Transverse colon (tissue), 4 donors: ENCODE measurements at regions of chr6 and their contacts with region 1.

Region 1: DNA sequence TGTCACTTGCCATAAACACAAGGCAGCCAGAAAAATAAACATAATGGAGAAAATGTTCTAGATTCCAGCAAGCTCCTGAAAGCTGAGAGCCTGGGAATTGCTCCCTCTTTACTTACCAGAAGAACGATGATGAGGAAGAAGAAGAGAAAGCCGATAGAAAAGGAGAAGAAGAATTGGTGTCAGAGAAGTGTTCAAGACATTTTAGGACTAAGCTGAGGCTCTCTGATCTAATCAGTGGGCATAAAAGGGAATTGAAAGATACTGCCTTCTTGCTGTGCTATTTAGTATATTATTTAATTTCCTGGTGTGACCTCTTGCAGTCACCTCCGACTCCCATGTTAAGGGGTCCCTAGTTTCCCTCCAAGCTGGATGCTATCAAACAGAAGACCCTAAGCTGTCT is 316.6 kb upstream of the JARID2 start:
- DNase-seq: no peak
- H3K4me3 ChIP-seq: no peak overlapping the region
- H3K27ac ChIP-seq: peak overlapping the region in 1 of 4 donors; percentile 15
- H3K4me1 ChIP-seq: peaks cover 0 to 22% (median 5%) of the 10 kb centered on the region in 4 donors
- H3K27me3 ChIP-seq: no peaks in the 10 kb centered on the region
- CTCF ChIP-seq: no peak
- EP300 ChIP-seq: no peak
- POLR2A ChIP-seq: no peak

Region 2: GRCh38 chr6:14711056-14711703 is 218.1 kb before region 1 on chr6:
- in situ Hi-C with region 1: no loop called
- intact Hi-C with region 1: no loop called
- DNase-seq: peak; percentile 49
- H3K4me3 ChIP-seq: no peak overlapping the region
- H3K27ac ChIP-seq: no peak overlapping the region
- H3K4me1 ChIP-seq: peaks cover 0 to 9% (median 0%) of the 10 kb centered on the region in 4 donors
- H3K27me3 ChIP-seq: no peaks in the 10 kb centered on the region
- CTCF ChIP-seq: peak; percentile 30 to 45 (median 39)
- EP300 ChIP-seq: no peak
- POLR2A ChIP-seq: no peak

Region 3: GRCh38 chr6:14883921-14884320 is 45.4 kb before region 1 on chr6:
- in situ Hi-C with region 1: no loop called
- intact Hi-C with region 1: loop called (anchors 2 kb)
- DNase-seq: no peak
- H3K4me3 ChIP-seq: no peak overlapping the region
- H3K27ac ChIP-seq: no peak overlapping the region
- H3K4me1 ChIP-seq: peaks cover 0 to 36% (median 0%) of the 10 kb centered on the region in 4 donors
- H3K27me3 ChIP-seq: no peaks in the 10 kb centered on the region
- CTCF ChIP-seq: no peak
- EP300 ChIP-seq: no peak
- POLR2A ChIP-seq: no peak

Region 4: DNA sequence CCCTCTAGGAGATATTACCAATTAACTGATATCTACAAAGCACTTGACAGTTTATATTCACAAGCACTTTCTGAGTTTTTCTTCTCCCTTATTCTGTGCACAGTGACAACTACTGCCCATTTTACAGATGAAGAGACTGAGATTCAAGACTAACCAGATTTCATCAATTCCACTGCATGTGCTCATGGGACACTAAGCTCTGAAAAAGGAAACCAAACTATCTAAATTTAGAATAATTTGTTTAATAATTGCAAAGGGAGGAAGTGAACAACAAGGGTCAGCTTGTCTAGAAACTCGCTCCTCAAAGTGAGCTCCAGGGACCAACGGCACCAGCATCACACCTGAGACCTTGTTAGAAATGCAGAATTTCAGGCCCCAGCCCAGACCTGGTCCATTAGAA is 1148.8 kb after region 1 on chr6:
- in situ Hi-C with region 1: no loop called
- intact Hi-C with region 1: no loop called
- DNase-seq: no peak
- H3K4me3 ChIP-seq: no peak overlapping the region
- H3K27ac ChIP-seq: no peak overlapping the region
- H3K4me1 ChIP-seq: peaks cover 0 to 20% (median 5%) of the 10 kb centered on the region in 4 donors
- H3K27me3 ChIP-seq: no peaks in the 10 kb centered on the region
- CTCF ChIP-seq: no peak
- EP300 ChIP-seq: no peak
- POLR2A ChIP-seq: no peak